ENCODE measurements at regions of chr3 and their contacts with region 1.

Region 1: GRCh38 chr3:152471814-152472671 is 203.3 kb downstream of the MBNL1 start:
- DNase-seq: peak; percentile 48 to 85 (median 63)
- ATAC-seq: peak; percentile 92
- H3K4me3 ChIP-seq: peak overlapping the region; percentile 39
- H3K4me3 Mint-ChIP-seq: peak overlapping the region; percentile 44
- H3K27ac ChIP-seq: peak overlapping the region in 1 of 2 donors; percentile 8
- H3K27ac Mint-ChIP-seq: peak overlapping the region; percentile 81
- H3K4me1 ChIP-seq: peaks cover 10% of the 10 kb centered on the region
- H3K4me1 Mint-ChIP-seq: peaks cover 18% of the 10 kb centered on the region
- H3K27me3 ChIP-seq: no peaks in the 10 kb centered on the region
- H3K27me3 Mint-ChIP-seq: no peaks in the 10 kb centered on the region
- CTCF ChIP-seq: peak; percentile 82

Region 2: DNA sequence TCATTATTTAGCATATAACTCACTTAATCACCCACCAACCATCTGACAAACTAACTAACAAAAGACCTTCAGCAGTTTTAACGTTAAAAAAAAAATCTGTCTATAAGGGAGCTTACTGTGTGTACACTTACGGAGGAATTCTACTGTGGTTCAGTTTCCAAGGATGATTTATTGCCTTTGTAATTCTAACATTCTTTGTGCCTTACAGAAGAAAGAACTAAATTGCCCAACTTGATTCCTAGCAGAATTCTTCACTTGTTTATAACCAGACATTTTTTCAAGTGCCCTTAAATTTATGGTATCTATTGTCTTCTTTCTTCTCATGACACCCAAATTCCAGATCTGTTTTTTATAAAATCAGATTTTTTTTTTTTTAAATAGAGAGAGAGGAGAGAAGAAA is 891.5 kb before region 1 on chr3:
- CTCF ChIA-PET with region 1: no interaction called
- POLR2A ChIA-PET with region 1: no interaction called
- intact Hi-C with region 1: no loop called
- DNase-seq: no peak
- ATAC-seq: no peak
- H3K4me3 ChIP-seq: no peak overlapping the region
- H3K4me3 Mint-ChIP-seq: no peak overlapping the region
- H3K27ac ChIP-seq: no peak overlapping the region
- H3K27ac Mint-ChIP-seq: no peak overlapping the region
- H3K4me1 ChIP-seq: no peaks in the 10 kb centered on the region
- H3K4me1 Mint-ChIP-seq: no peaks in the 10 kb centered on the region
- H3K27me3 ChIP-seq: no peaks in the 10 kb centered on the region
- H3K27me3 Mint-ChIP-seq: peaks cover 3% of the 10 kb centered on the region
- CTCF ChIP-seq: no peak

Region 3: GRCh38 chr3:151709847-151710246 is 762.2 kb before region 1 on chr3:
- CTCF ChIA-PET with region 1: no interaction called
- POLR2A ChIA-PET with region 1: no interaction called
- intact Hi-C with region 1: no loop called
- DNase-seq: no peak
- ATAC-seq: no peak
- H3K4me3 ChIP-seq: no peak overlapping the region
- H3K4me3 Mint-ChIP-seq: no peak overlapping the region
- H3K27ac ChIP-seq: no peak overlapping the region
- H3K27ac Mint-ChIP-seq: no peak overlapping the region
- H3K4me1 ChIP-seq: no peaks in the 10 kb centered on the region
- H3K4me1 Mint-ChIP-seq: no peaks in the 10 kb centered on the region
- H3K27me3 ChIP-seq: no peaks in the 10 kb centered on the region
- H3K27me3 Mint-ChIP-seq: no peaks in the 10 kb centered on the region
- CTCF ChIP-seq: no peak

Region 4: DNA sequence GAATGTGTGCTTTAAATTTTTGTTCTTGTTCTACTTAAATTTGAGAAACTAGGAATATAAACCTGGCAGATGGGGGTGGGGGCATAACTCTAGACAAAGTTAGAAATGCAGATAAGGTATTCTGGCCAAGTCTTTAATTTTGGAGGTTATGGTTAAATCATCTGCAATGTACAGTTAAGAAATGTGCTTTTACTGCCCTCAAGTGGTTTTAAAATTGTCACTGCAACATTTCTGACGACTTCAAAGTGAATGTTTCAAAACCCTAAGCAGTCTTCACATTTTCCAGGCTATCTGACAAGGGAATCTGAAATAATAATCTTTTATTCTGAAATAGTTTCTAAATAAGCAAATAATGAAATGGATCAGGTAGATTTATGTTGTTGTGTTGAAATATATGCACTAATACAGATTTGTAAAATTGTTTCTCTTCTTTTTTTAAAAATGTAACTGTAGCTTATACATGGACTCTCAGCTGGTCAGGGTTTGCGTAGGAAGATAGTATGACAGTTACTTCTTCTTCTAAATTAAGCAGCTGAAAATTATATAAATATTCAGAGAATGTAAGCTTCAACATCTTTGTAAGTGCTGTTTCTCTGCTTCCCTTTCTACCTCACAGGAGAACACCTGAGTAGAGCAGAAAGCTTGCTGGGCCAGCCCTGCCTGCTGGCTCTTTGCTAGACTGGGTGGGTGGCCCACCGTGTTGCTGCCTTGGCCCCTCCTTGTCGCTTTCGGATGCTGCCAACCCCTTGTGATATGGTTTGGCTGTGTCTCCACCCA is 553.6 kb before region 1 on chr3:
- CTCF ChIA-PET with region 1: no interaction called
- POLR2A ChIA-PET with region 1: no interaction called
- intact Hi-C with region 1: no loop called
- DNase-seq: peak in 3 of 14 experiments; percentile 49 to 59 (median 54)
- ATAC-seq: peak; percentile 34
- H3K4me3 ChIP-seq: no peak overlapping the region
- H3K4me3 Mint-ChIP-seq: no peak overlapping the region
- H3K27ac ChIP-seq: no peak overlapping the region
- H3K27ac Mint-ChIP-seq: no peak overlapping the region
- H3K4me1 ChIP-seq: no peaks in the 10 kb centered on the region
- H3K4me1 Mint-ChIP-seq: no peaks in the 10 kb centered on the region
- H3K27me3 ChIP-seq: no peaks in the 10 kb centered on the region
- H3K27me3 Mint-ChIP-seq: no peaks in the 10 kb centered on the region
- CTCF ChIP-seq: peak; percentile 68

Region 5: DNA sequence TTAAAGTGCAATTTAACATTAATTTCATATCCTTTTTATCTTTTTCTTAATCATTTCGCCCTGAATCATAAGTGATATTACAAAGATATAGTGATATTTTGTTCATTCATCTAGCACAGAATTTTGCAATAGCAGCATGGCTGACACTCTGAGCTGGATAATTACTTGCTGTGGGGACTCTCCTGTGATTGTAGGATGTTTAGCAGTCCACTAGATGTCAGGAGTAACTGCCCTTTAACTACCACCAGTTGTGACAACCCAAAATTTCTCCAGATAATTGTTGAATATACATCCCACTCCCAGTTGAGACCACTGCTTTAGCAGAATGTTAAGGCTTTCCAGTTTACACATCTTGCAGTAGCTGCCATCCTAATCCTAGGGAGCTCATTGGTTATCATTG is 400.1 kb before region 1 on chr3:
- CTCF ChIA-PET with region 1: interaction called, 3 read pairs
- POLR2A ChIA-PET with region 1: interaction called, 6 read pairs
- intact Hi-C with region 1: loop called (anchors 1 to 2 kb)
- DNase-seq: peak in 4 of 14 experiments; percentile 2 to 65 (median 56)
- ATAC-seq: peak; percentile 86
- H3K4me3 ChIP-seq: no peak overlapping the region
- H3K4me3 Mint-ChIP-seq: no peak overlapping the region
- H3K27ac ChIP-seq: no peak overlapping the region
- H3K27ac Mint-ChIP-seq: no peak overlapping the region
- H3K4me1 ChIP-seq: no peaks in the 10 kb centered on the region
- H3K4me1 Mint-ChIP-seq: peaks cover 5% of the 10 kb centered on the region
- H3K27me3 ChIP-seq: no peaks in the 10 kb centered on the region
- H3K27me3 Mint-ChIP-seq: no peaks in the 10 kb centered on the region
- CTCF ChIP-seq: peak; percentile 45

Region 6: GRCh38 chr3:152183473-152183872 is 288.6 kb before region 1 on chr3:
- CTCF ChIA-PET with region 1: interaction called, 11 read pairs
- POLR2A ChIA-PET with region 1: interaction called, 4 read pairs
- intact Hi-C with region 1: loop called in 1 of 2 experiments (anchors 5 kb)
- DNase-seq: peak in 13 of 14 experiments; percentile 31 to 80 (median 39)
- ATAC-seq: peak; percentile 91
- H3K4me3 ChIP-seq: no peak overlapping the region
- H3K4me3 Mint-ChIP-seq: peak overlapping the region; percentile 45
- H3K27ac ChIP-seq: no peak overlapping the region
- H3K27ac Mint-ChIP-seq: peak overlapping the region; percentile 6
- H3K4me1 ChIP-seq: peaks cover 11% of the 10 kb centered on the region
- H3K4me1 Mint-ChIP-seq: peaks cover 63% of the 10 kb centered on the region
- H3K27me3 ChIP-seq: no peaks in the 10 kb centered on the region
- H3K27me3 Mint-ChIP-seq: no peaks in the 10 kb centered on the region
- CTCF ChIP-seq: peak; percentile 86